Activated CD4-positive, alpha-beta T cell treated with anti-CD3 and anti-CD28 coated beads for 36 hours (primary cell): ENCODE measurements at regions of chr16 and their contacts with region 1.

Region 1: GRCh38 chr16:30698139-30698815 is 694 bp upstream of the SRCAP start:
- DNase-seq: peak; percentile 100
- ATAC-seq: peak; percentile 75
- H3K4me3 Mint-ChIP-seq: peak overlapping the region; percentile 96
- H3K27ac Mint-ChIP-seq: peak overlapping the region; percentile 99
- H3K4me1 Mint-ChIP-seq: peaks cover 33% of the 10 kb centered on the region
- H3K27me3 Mint-ChIP-seq: no peaks in the 10 kb centered on the region

Region 2: GRCh38 chr16:29154676-29155121 is 1543.6 kb before region 1 on chr16:
- CTCF ChIA-PET with region 1: no interaction called
- POLR2A ChIA-PET with region 1: no interaction called
- intact Hi-C with region 1: no loop called
- DNase-seq: peak; percentile 35
- ATAC-seq: no peak
- H3K4me3 Mint-ChIP-seq: no peak overlapping the region
- H3K27ac Mint-ChIP-seq: no peak overlapping the region
- H3K4me1 Mint-ChIP-seq: peaks cover 64% of the 10 kb centered on the region
- H3K27me3 Mint-ChIP-seq: no peaks in the 10 kb centered on the region

Region 3: GRCh38 chr16:29995911-29996772 is 702.1 kb before region 1 on chr16 and contains the start of gene INO80E:
- CTCF ChIA-PET with region 1: no interaction called
- POLR2A ChIA-PET with region 1: no interaction called
- intact Hi-C with region 1: loop called in 1 of 2 experiments (anchors 1 kb)
- DNase-seq: peak; percentile 100
- ATAC-seq: peak; percentile 98
- H3K4me3 Mint-ChIP-seq: peak within 1 kb of the TSS; percentile 96
- H3K27ac Mint-ChIP-seq: peak within 1 kb of the TSS; percentile 98
- H3K4me1 Mint-ChIP-seq: peaks cover 25% of the 10 kb centered on the region
- H3K27me3 Mint-ChIP-seq: no peaks in the 10 kb centered on the region
- total RNA-seq, gene INO80E: 80.1 to 106 TPM

Region 4: GRCh38 chr16:30417529-30418349 is 280.5 kb before region 1 on chr16:
- CTCF ChIA-PET with region 1: no interaction called
- POLR2A ChIA-PET with region 1: no interaction called
- intact Hi-C with region 1: loop called in 1 of 2 experiments (anchors 2 kb)
- DNase-seq: peak; percentile 94
- ATAC-seq: peak; percentile 92
- H3K4me3 Mint-ChIP-seq: peak overlapping the region; percentile 49
- H3K27ac Mint-ChIP-seq: no peak overlapping the region
- H3K4me1 Mint-ChIP-seq: peaks cover 31% of the 10 kb centered on the region
- H3K27me3 Mint-ChIP-seq: no peaks in the 10 kb centered on the region

Region 5: GRCh38 chr16:30557957-30558788 is 140.1 kb before region 1 on chr16 and contains the start of gene ZNF764:
- CTCF ChIA-PET with region 1: interaction called, 3 read pairs
- POLR2A ChIA-PET with region 1: no interaction called
- intact Hi-C with region 1: loop called (anchors 1 to 5 kb)
- DNase-seq: peak; percentile 99
- ATAC-seq: peak; percentile 96
- H3K4me3 Mint-ChIP-seq: peak within 1 kb of the TSS; percentile 85
- H3K27ac Mint-ChIP-seq: peak within 1 kb of the TSS; percentile 94
- H3K4me1 Mint-ChIP-seq: peaks cover 44% of the 10 kb centered on the region
- H3K27me3 Mint-ChIP-seq: no peaks in the 10 kb centered on the region
- total RNA-seq, gene ZNF764: 8.0 to 11.2 TPM

Region 6: DNA sequence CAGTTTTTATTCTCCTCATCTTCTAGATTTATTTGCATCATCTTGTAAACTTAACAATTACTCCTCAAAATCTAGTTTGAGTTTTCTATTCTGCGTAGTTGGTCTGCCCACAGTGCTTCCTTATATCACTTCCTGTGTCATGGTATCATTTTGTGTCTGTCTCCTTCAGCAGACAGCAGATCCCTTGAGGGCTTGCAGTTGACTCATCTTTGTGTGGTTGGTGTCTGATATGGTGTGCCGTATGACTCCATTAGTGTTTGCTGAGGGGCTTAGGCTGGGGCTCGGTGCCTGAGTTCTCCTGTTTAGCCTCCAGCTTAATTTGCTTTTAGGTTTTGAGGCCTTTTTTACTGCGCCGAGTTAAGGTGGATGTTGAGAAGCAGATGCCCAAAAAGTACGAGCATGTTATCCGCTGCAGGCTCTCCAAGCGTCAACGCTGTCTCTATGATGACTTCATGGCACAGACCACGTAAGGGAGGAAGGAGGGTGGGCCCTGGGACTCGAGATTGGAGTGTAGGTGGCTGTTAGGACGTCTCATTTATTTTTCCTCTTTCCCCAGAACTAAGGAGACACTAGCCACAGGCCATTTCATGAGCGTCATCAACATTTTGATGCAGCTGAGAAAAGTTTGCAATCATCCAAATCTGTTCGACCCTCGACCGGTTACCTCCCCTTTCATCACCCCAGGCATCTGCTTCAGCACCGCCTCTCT is 17.6 kb after region 1 on chr16:
- CTCF ChIA-PET with region 1: interaction called, 4 read pairs
- POLR2A ChIA-PET with region 1: interaction called, 4 read pairs
- intact Hi-C with region 1: loop called (anchors 1 kb)
- DNase-seq: peak; percentile 62
- ATAC-seq: peak; percentile 100
- H3K4me3 Mint-ChIP-seq: peak overlapping the region; percentile 10
- H3K27ac Mint-ChIP-seq: peak overlapping the region; percentile 96
- H3K4me1 Mint-ChIP-seq: peaks cover 30% of the 10 kb centered on the region
- H3K27me3 Mint-ChIP-seq: no peaks in the 10 kb centered on the region

Region 7: DNA sequence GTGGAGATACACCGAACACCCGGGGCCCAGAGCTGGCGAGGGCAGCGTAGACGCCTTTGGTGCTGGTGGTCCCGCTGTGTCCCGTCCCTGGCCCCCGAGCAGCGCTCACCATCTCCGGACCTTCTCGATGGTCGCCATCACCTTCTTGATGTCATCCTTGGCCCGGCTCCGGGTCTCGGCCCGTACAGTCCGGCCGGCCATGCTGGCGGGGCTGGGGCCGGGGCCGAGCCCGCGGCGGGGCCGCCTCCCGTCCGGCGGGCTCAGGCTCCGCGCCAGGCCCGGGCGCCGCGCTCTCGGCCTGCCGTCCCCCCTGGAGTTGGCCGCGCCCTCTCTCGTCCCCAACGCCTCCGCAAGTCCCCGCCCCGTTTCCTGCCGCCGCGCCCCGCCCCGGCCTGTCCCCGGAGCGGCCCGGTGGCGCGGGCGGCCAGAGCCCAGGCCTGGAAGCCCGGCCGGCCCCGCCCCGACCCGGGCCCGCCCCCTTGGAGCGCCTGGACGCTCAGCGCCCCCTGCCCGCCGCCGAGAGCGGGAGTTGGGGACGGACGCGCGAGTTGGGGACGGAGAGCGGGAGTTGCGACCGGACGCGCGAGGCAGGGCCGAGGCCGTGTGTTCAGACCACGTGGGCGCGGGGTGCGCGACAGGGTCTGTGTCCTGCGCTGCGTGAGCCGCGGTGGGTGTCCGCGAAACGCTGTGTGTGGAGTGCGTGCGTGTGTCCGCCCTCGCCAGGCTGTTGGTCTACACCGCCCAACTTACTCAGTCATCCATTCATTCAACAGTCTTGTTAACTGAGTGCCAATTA is 195.7 kb after region 1 on chr16 and contains the start of gene BCL7C:
- CTCF ChIA-PET with region 1: no interaction called
- POLR2A ChIA-PET with region 1: no interaction called
- intact Hi-C with region 1: loop called in 1 of 2 experiments (anchors 1 kb)
- DNase-seq: peak; percentile 92
- ATAC-seq: peak; percentile 74
- H3K4me3 Mint-ChIP-seq: peak within 1 kb of the TSS; percentile 84
- H3K27ac Mint-ChIP-seq: peak within 1 kb of the TSS; percentile 88
- H3K4me1 Mint-ChIP-seq: peaks cover 35% of the 10 kb centered on the region
- H3K27me3 Mint-ChIP-seq: no peaks in the 10 kb centered on the region
- total RNA-seq, gene BCL7C: 19.5 to 20.4 TPM

Region 8: DNA sequence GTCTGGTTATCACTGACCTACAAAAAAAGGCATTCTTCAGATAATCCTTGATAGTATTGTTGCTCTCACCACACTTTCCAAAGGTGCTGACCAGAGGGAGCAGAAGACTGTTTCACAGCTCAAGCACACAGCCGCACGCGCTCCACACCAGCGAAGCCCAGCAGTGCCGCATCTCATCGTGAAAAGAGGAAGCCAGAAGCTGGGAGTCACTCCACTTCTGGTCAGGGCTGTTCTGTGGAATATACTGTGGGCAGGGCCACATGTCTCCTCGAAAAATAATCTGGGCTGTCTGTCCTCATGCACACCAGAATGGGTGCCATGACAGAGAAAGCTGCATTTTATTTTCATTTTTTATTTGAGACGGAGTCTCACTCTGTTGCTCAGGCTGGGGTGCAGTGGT is 458.9 kb after region 1 on chr16:
- CTCF ChIA-PET with region 1: no interaction called
- POLR2A ChIA-PET with region 1: no interaction called
- intact Hi-C with region 1: no loop called
- DNase-seq: no peak
- ATAC-seq: no peak
- H3K4me3 Mint-ChIP-seq: no peak overlapping the region
- H3K27ac Mint-ChIP-seq: no peak overlapping the region
- H3K4me1 Mint-ChIP-seq: peaks cover 7% of the 10 kb centered on the region
- H3K27me3 Mint-ChIP-seq: no peaks in the 10 kb centered on the region